CD14-positive monocyte (primary cell): ENCODE measurements at regions of chr3 and their contacts with region 1.

Region 1: DNA sequence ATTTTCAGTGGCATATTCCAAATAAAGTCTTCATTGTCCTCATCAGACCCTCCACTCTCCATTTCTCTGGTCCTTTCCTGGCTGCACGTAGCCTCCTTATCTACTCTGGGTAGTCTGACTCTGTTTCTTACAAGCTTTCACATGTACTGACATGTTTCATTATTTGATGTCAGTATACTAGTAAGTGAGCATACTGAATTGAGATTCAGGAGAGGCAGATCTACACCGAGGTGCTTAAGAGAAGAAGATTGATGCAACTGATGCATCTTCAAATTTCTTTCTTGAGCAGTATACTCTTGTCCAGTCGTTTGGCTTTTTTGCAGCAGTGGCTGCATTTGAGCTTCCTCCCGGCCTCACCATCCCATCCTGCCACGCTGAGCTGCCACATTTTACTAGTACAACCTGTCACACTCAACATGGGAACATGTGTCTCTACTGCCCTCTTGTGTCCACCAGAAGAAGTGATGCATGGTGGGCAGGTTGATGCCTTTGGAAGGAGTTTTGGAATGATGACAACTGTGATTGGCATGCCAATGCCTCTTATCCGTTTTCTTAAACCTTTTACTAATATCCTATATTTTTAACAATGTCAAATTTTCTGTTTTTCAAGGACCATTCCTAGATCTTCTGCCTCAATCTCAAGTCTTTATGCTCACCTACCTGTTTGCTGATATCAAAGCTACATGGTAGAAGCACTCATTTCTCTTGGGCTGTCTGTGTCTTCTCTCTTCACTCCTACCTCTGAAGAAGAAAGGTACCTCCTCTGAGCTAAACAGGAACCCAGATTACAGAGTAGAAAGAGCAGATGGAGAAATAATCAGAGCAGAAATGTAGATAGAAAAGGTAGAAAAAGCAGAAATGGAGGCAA is 38.7 kb downstream of the GUCA1C start:
- DNase-seq: peak; percentile 0 to 29 (median 8)
- H3K4me3 ChIP-seq: no peak overlapping the region
- H3K4me3 Mint-ChIP-seq: no peak overlapping the region
- H3K27ac ChIP-seq: no peak overlapping the region
- H3K27ac Mint-ChIP-seq: no peak overlapping the region
- H3K4me1 ChIP-seq: no peaks in the 10 kb centered on the region
- H3K4me1 Mint-ChIP-seq: no peaks in the 10 kb centered on the region
- H3K27me3 ChIP-seq: no peaks in the 10 kb centered on the region
- H3K27me3 Mint-ChIP-seq: peaks cover 2 to 12% (median 9%) of the 10 kb centered on the region in 3 donors
- CTCF ChIP-seq: peak; percentile 87

Region 2: DNA sequence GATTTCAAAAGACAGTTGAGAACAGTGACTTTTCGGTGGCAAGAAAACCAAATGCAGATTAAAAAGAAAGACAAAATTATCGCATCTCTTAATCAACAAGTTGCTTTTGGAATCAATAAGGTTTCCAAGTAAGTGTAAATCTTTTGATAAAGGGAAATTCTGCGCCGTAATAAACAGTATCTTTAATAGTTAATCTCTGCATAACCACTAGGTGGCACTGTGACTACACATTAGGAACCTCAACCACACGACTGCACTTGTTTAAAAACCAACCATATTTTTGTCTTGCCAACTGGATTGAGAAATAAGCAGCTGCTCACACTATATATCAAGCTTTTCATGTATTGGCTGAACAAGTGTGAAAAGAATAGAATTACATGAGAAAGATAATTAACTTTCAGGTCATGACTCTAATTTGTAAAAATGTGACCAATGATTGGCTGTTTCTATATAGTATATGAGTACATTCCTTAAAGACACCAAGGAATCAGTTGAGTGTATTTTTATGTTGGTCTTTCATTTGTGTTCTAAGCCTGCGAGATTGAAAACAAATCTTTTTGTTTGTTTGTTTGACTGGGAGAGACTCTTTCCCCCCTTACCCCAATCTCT is 252.8 kb before region 1 on chr3:
- intact Hi-C with region 1: loop called (anchors 10 kb)
- DNase-seq: peak; percentile 27 to 65 (median 51)
- H3K4me3 ChIP-seq: no peak overlapping the region
- H3K4me3 Mint-ChIP-seq: no peak overlapping the region
- H3K27ac ChIP-seq: no peak overlapping the region
- H3K27ac Mint-ChIP-seq: no peak overlapping the region
- H3K4me1 ChIP-seq: no peaks in the 10 kb centered on the region
- H3K4me1 Mint-ChIP-seq: peaks cover 3% of the 10 kb centered on the region
- H3K27me3 ChIP-seq: no peaks in the 10 kb centered on the region
- H3K27me3 Mint-ChIP-seq: no peaks in the 10 kb centered on the region
- CTCF ChIP-seq: peak; percentile 82